ENCODE measurements at regions of chr1 and their contacts with region 1.

Region 1: GRCh38 chr1:64363111-64363510 is 106.8 kb upstream of the CACHD1 start:
- DNase-seq: peak; percentile 90
- H3K4me3 ChIP-seq: no peak overlapping the region
- H3K27ac ChIP-seq: peak overlapping the region; percentile 99
- H3K4me1 ChIP-seq: peaks cover 50% of the 10 kb centered on the region
- H3K27me3 ChIP-seq: no peaks in the 10 kb centered on the region
- CTCF ChIP-seq: no peak

Region 2: DNA sequence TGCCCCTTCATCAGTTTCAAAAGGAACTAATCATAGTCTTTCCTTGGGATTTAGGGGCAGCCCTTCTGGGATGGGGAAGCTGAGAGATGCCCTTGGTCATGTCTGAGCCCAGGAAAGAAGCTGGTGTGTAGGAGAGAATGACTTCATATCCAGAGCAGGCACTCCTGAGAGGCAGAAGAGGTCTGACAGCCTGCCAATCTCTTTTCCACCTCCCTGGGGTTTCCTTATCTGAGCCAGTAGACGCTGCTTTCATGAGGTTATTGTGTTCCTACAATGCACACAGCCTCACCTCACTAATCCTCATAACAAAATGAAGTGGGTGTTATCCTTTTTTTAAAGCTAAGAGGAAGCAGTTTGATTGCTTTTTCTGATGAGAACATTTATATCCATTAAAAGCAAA is 575.2 kb before region 1 on chr1:
- CTCF ChIA-PET with region 1: no interaction called
- POLR2A ChIA-PET with region 1: no interaction called
- intact Hi-C with region 1: loop called (anchors 5 kb)
- DNase-seq: peak; percentile 82
- H3K4me3 ChIP-seq: no peak overlapping the region
- H3K27ac ChIP-seq: peak overlapping the region; percentile 69
- H3K4me1 ChIP-seq: peaks cover 66% of the 10 kb centered on the region
- H3K27me3 ChIP-seq: no peaks in the 10 kb centered on the region
- CTCF ChIP-seq: no peak

Region 3: GRCh38 chr1:64282354-64282753 is 80.8 kb before region 1 on chr1:
- CTCF ChIA-PET with region 1: no interaction called
- POLR2A ChIA-PET with region 1: no interaction called
- intact Hi-C with region 1: loop called (anchors 5 kb)
- DNase-seq: peak; percentile 98
- H3K4me3 ChIP-seq: no peak overlapping the region
- H3K27ac ChIP-seq: peak overlapping the region; percentile 78
- H3K4me1 ChIP-seq: peaks cover 43% of the 10 kb centered on the region
- H3K27me3 ChIP-seq: no peaks in the 10 kb centered on the region
- CTCF ChIP-seq: no peak

Region 4: GRCh38 chr1:64654519-64655341 is 291.6 kb after region 1 on chr1:
- CTCF ChIA-PET with region 1: interaction called, 4 read pairs
- POLR2A ChIA-PET with region 1: no interaction called
- intact Hi-C with region 1: loop called (anchors 10 kb)
- DNase-seq: peak; percentile 78
- H3K4me3 ChIP-seq: no peak overlapping the region
- H3K27ac ChIP-seq: no peak overlapping the region
- H3K4me1 ChIP-seq: peaks cover 14% of the 10 kb centered on the region
- H3K27me3 ChIP-seq: no peaks in the 10 kb centered on the region
- CTCF ChIP-seq: peak; percentile 59

Region 5: DNA sequence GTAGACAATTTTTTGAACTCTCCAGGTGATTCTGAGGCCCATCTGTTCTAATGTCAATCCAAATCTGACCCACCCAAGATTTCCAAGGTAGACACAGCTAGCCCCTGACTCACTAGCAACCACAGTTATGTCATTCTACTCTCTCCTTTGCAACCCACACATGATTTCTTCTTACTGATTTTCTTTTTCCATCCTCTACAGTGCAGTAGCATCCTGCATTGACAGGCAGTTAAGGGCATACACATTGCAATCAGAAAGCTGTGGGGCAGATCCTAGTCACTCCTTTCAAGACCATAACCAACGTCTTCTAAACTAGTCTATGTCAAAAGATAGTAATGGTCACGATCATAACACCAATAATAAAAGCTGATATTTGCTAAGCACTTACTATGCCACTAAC is 549.1 kb after region 1 on chr1:
- CTCF ChIA-PET with region 1: no interaction called
- POLR2A ChIA-PET with region 1: no interaction called
- intact Hi-C with region 1: loop called (anchors 1 kb)
- DNase-seq: no peak
- H3K4me3 ChIP-seq: no peak overlapping the region
- H3K27ac ChIP-seq: peak overlapping the region; percentile 99
- H3K4me1 ChIP-seq: peaks cover 97% of the 10 kb centered on the region
- H3K27me3 ChIP-seq: no peaks in the 10 kb centered on the region
- CTCF ChIP-seq: no peak

Measured in A673 (cell line).